Dorsolateral prefrontal cortex (tissue), 120 donors: ENCODE measurements at regions of chrX and their contacts with region 1.

Region 1: GRCh38 chrX:128816919-128817318 is 706.4 kb downstream of the SMARCA1 start:
- DNase-seq: no peak
- H3K4me3 ChIP-seq: no peak overlapping the region
- H3K27ac ChIP-seq: no peak overlapping the region
- H3K27me3 ChIP-seq: peaks cover 0 to 39% (median 4%) of the 10 kb centered on the region in 45 donors
- CTCF ChIP-seq: peak in 34 of 56 donors; percentile 13 to 46 (median 30)

Region 2: DNA sequence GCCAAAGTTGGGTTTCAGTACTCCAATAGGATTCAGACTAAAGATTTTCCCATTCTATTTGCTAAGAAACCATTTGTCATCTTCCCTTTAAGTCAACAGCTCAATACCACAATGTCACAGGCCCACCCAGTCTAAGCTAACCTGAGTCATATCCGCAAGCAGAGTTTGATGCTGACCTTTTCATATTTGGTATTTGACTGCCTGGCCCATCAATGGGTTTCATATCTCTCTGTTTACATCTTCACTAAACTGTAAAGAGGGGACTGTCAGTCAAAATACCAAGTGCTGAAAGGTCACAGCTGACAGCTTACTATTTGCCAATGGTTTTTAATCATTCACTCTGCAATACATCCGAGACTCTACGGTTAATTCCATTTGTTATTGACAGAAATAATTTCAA is 57.2 kb before region 1 on chrX:
- intact Hi-C with region 1: no loop called
- DNase-seq: no peak
- H3K4me3 ChIP-seq: no peak overlapping the region
- H3K27ac ChIP-seq: no peak overlapping the region
- H3K27me3 ChIP-seq: peaks cover 0 to 28% (median 0%) of the 10 kb centered on the region in 45 donors
- CTCF ChIP-seq: no peak

Region 3: GRCh38 chrX:129115104-129115503 is 298.2 kb after region 1 on chrX:
- intact Hi-C with region 1: loop called in 1 of 2 experiments (anchors 5 kb)
- DNase-seq: no peak
- H3K4me3 ChIP-seq: no peak overlapping the region
- H3K27ac ChIP-seq: no peak overlapping the region
- H3K27me3 ChIP-seq: peaks cover 0 to 54% (median 4%) of the 10 kb centered on the region in 45 donors
- CTCF ChIP-seq: peak in 10 of 56 donors; percentile 6 to 30 (median 14)